ENCODE measurements at regions of chr15 and their contacts with region 1.

Region 1: GRCh38 chr15:81265944-81266775 is 57.8 kb downstream of the STARD5 start:
- DNase-seq: peak; percentile 84
- ATAC-seq: peak; percentile 89
- H3K4me3 ChIP-seq: peak overlapping the region in 4 of 5 experiments; percentile 8 to 53 (median 29)
- H3K4me3 Mint-ChIP-seq: peak overlapping the region; percentile 84
- H3K27ac ChIP-seq: no peak overlapping the region
- H3K27ac Mint-ChIP-seq: no peak overlapping the region
- H3K4me1 ChIP-seq: peaks cover 14 to 20% of the 10 kb centered on the region in 2 donors
- H3K4me1 Mint-ChIP-seq: peaks cover 21% of the 10 kb centered on the region
- H3K27me3 ChIP-seq: no peaks in the 10 kb centered on the region
- H3K27me3 Mint-ChIP-seq: no peaks in the 10 kb centered on the region
- CTCF ChIP-seq: peak; percentile 88

Region 2: DNA sequence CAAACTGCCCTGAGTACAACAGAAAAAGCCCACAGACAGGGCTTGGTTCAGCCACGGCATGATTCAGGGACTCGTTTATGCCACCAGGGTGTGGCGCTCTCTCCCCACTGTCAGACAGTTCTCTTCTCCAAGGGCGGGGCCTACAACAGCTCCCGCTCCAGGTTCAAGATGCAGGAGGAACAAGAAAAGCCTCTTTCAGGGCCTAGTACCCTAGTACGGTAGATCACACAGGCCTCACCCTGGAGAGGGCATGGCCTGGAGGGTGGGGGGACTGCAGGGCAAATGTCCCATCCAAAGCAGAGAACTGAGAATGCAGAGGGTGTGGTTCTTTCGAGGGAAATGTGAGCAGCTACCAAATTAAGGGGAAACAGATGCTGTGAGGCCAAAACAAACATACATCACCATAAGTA is 288.5 kb before region 1 on chr15:
- CTCF ChIA-PET with region 1: interaction called, 30 read pairs
- POLR2A ChIA-PET with region 1: no interaction called
- intact Hi-C with region 1: loop called (anchors 1 kb)
- DNase-seq: peak; percentile 53
- ATAC-seq: peak; percentile 53
- H3K4me3 ChIP-seq: no peak overlapping the region
- H3K4me3 Mint-ChIP-seq: peak overlapping the region; percentile 32
- H3K27ac ChIP-seq: peak overlapping the region in 1 of 2 donors; percentile 2
- H3K27ac Mint-ChIP-seq: peak overlapping the region; percentile 67
- H3K4me1 ChIP-seq: peaks cover 6 to 9% of the 10 kb centered on the region in 2 donors
- H3K4me1 Mint-ChIP-seq: peaks cover 30% of the 10 kb centered on the region
- H3K27me3 ChIP-seq: no peaks in the 10 kb centered on the region
- H3K27me3 Mint-ChIP-seq: no peaks in the 10 kb centered on the region
- CTCF ChIP-seq: peak; percentile 51

Region 3: GRCh38 chr15:81254277-81254915 is 11.8 kb before region 1 on chr15:
- CTCF ChIA-PET with region 1: interaction called, 13 read pairs
- POLR2A ChIA-PET with region 1: no interaction called
- intact Hi-C with region 1: no loop called
- DNase-seq: no peak
- ATAC-seq: no peak
- H3K4me3 ChIP-seq: no peak overlapping the region
- H3K4me3 Mint-ChIP-seq: no peak overlapping the region
- H3K27ac ChIP-seq: no peak overlapping the region
- H3K27ac Mint-ChIP-seq: no peak overlapping the region
- H3K4me1 ChIP-seq: no peaks in the 10 kb centered on the region
- H3K4me1 Mint-ChIP-seq: no peaks in the 10 kb centered on the region
- H3K27me3 ChIP-seq: peaks cover 0 to 6% (median 0%) of the 10 kb centered on the region in 4 experiments
- H3K27me3 Mint-ChIP-seq: peaks cover 52% of the 10 kb centered on the region
- CTCF ChIP-seq: no peak

Region 4: DNA sequence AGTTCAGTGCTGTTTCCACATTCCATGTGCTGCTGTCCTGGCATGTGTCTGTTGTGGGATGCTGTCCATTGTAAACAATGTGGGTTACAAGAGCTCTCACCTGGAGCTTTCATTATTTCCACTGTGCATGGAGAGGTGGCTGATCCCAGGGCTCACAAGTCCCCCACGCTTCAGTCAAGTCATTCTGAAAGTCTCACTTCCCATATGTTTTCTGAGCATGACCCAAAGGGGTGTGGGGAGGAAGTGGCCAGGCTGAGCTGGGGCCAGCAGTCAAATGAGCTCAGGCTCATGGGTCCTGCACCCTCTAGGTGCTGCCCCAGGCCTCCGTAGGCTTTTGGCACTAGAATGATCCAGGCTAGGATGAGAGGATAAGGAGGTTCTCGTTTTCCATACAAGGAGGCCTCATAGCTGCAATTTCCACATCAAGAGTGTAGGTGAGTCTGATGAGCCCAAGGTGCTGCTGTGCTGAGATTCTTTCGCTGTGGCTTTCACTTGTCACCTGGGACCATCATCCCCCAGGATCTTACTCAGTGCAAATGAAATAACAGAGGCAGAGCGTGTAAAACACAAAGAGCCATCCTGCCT is 35.7 kb after region 1 on chr15:
- CTCF ChIA-PET with region 1: interaction called, 146 read pairs
- POLR2A ChIA-PET with region 1: no interaction called
- intact Hi-C with region 1: no loop called
- DNase-seq: peak; percentile 84
- ATAC-seq: peak; percentile 73
- H3K4me3 ChIP-seq: peak overlapping the region; percentile 79 to 100 (median 87)
- H3K4me3 Mint-ChIP-seq: peak overlapping the region; percentile 100
- H3K27ac ChIP-seq: peak overlapping the region; percentile 95 to 98
- H3K27ac Mint-ChIP-seq: peak overlapping the region; percentile 98
- H3K4me1 ChIP-seq: peaks cover 70 to 92% of the 10 kb centered on the region in 2 donors
- H3K4me1 Mint-ChIP-seq: peaks cover 92% of the 10 kb centered on the region
- H3K27me3 ChIP-seq: no peaks in the 10 kb centered on the region
- H3K27me3 Mint-ChIP-seq: no peaks in the 10 kb centered on the region
- CTCF ChIP-seq: no peak

Region 5: GRCh38 chr15:81336568-81336967 is 70.4 kb after region 1 on chr15:
- CTCF ChIA-PET with region 1: interaction called, 119 read pairs
- POLR2A ChIA-PET with region 1: no interaction called
- intact Hi-C with region 1: no loop called
- DNase-seq: peak; percentile 65
- ATAC-seq: peak; percentile 57
- H3K4me3 ChIP-seq: no peak overlapping the region
- H3K4me3 Mint-ChIP-seq: no peak overlapping the region
- H3K27ac ChIP-seq: no peak overlapping the region
- H3K27ac Mint-ChIP-seq: no peak overlapping the region
- H3K4me1 ChIP-seq: no peaks in the 10 kb centered on the region
- H3K4me1 Mint-ChIP-seq: peaks cover 7% of the 10 kb centered on the region
- H3K27me3 ChIP-seq: no peaks in the 10 kb centered on the region
- H3K27me3 Mint-ChIP-seq: no peaks in the 10 kb centered on the region
- CTCF ChIP-seq: peak; percentile 51

Region 6: GRCh38 chr15:81394603-81395002 is 128.4 kb after region 1 on chr15:
- CTCF ChIA-PET with region 1: interaction called, 125 read pairs
- POLR2A ChIA-PET with region 1: no interaction called
- intact Hi-C with region 1: no loop called
- DNase-seq: no peak
- ATAC-seq: no peak
- H3K4me3 ChIP-seq: no peak overlapping the region
- H3K4me3 Mint-ChIP-seq: no peak overlapping the region
- H3K27ac ChIP-seq: no peak overlapping the region
- H3K27ac Mint-ChIP-seq: no peak overlapping the region
- H3K4me1 ChIP-seq: no peaks in the 10 kb centered on the region
- H3K4me1 Mint-ChIP-seq: no peaks in the 10 kb centered on the region
- H3K27me3 ChIP-seq: no peaks in the 10 kb centered on the region
- H3K27me3 Mint-ChIP-seq: no peaks in the 10 kb centered on the region
- CTCF ChIP-seq: no peak

Region 7: DNA sequence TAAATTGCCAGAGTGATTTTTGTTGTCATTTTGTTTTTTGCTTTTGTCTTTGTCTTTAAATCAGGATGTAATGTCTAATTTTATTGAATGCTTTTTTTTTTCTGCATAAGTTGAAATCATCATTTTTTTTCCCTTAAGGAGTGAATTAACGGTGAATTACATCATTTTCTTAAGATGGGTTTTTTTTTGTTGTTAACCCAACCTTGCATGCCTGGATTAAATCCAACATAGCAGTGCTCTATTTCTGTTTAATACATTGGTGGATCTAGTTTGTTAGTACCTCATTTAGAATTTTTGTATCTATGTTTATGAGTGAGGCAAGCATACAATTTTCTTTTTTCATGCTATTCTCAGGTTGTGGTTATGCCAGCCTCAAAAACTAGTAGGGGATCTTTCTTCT is 294.2 kb after region 1 on chr15:
- CTCF ChIA-PET with region 1: no interaction called
- POLR2A ChIA-PET with region 1: no interaction called
- intact Hi-C with region 1: no loop called
- DNase-seq: no peak
- ATAC-seq: no peak
- H3K4me3 ChIP-seq: no peak overlapping the region
- H3K4me3 Mint-ChIP-seq: no peak overlapping the region
- H3K27ac ChIP-seq: no peak overlapping the region
- H3K27ac Mint-ChIP-seq: no peak overlapping the region
- H3K4me1 ChIP-seq: no peaks in the 10 kb centered on the region
- H3K4me1 Mint-ChIP-seq: no peaks in the 10 kb centered on the region
- H3K27me3 ChIP-seq: no peaks in the 10 kb centered on the region
- H3K27me3 Mint-ChIP-seq: peaks cover 7% of the 10 kb centered on the region
- CTCF ChIP-seq: no peak